ENCODE measurements at regions of chr3 and their contacts with region 1.

Region 1: GRCh38 chr3:73572368-73572767 is 52.4 kb downstream of the PDZRN3 start:
- DNase-seq: peak; percentile 75 to 89
- H3K4me3 ChIP-seq: no peak overlapping the region
- H3K4me3 Mint-ChIP-seq: peak overlapping the region; percentile 62
- H3K27ac Mint-ChIP-seq: peak overlapping the region; percentile 82
- H3K4me1 ChIP-seq: peaks cover 71% of the 10 kb centered on the region
- H3K4me1 Mint-ChIP-seq: peaks cover 59% of the 10 kb centered on the region
- H3K27me3 ChIP-seq: no peaks in the 10 kb centered on the region
- H3K27me3 Mint-ChIP-seq: no peaks in the 10 kb centered on the region
- CTCF ChIP-seq: no peak

Region 2: DNA sequence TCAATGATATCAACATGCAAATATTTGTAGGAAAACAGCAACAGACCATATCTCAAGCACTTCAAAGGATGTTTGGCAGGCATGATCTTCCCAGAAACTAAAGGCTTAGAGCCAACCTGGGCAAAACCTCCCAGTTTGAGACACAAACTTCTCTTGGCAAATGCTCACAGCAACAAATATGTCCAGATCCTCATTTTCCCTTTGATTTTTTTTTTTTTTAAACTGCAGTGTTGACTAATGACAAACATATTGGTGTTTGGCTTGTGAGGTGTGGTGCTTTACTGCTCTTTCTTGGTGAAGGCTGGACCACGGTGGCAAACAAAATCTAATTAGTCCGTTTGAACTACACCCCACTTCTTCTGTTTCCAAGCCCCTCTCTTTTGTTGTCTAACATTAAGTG is 423.7 kb before region 1 on chr3:
- CTCF ChIA-PET with region 1: no interaction called
- POLR2A ChIA-PET with region 1: no interaction called
- intact Hi-C with region 1: loop called (anchors 5 kb)
- DNase-seq: peak; percentile 58 to 67
- H3K4me3 ChIP-seq: no peak overlapping the region
- H3K4me3 Mint-ChIP-seq: peak overlapping the region; percentile 14
- H3K27ac Mint-ChIP-seq: peak overlapping the region; percentile 63
- H3K4me1 ChIP-seq: peaks cover 35% of the 10 kb centered on the region
- H3K4me1 Mint-ChIP-seq: peaks cover 23% of the 10 kb centered on the region
- H3K27me3 ChIP-seq: no peaks in the 10 kb centered on the region
- H3K27me3 Mint-ChIP-seq: no peaks in the 10 kb centered on the region
- CTCF ChIP-seq: no peak

Region 3: GRCh38 chr3:73530022-73530396 is 42.4 kb before region 1 on chr3:
- CTCF ChIA-PET with region 1: no interaction called
- POLR2A ChIA-PET with region 1: no interaction called
- intact Hi-C with region 1: loop called (anchors 2 kb)
- DNase-seq: no peak
- H3K4me3 ChIP-seq: no peak overlapping the region
- H3K4me3 Mint-ChIP-seq: no peak overlapping the region
- H3K27ac Mint-ChIP-seq: no peak overlapping the region
- H3K4me1 ChIP-seq: peaks cover 11% of the 10 kb centered on the region
- H3K4me1 Mint-ChIP-seq: peaks cover 26% of the 10 kb centered on the region
- H3K27me3 ChIP-seq: no peaks in the 10 kb centered on the region
- H3K27me3 Mint-ChIP-seq: no peaks in the 10 kb centered on the region
- CTCF ChIP-seq: no peak

Region 4: DNA sequence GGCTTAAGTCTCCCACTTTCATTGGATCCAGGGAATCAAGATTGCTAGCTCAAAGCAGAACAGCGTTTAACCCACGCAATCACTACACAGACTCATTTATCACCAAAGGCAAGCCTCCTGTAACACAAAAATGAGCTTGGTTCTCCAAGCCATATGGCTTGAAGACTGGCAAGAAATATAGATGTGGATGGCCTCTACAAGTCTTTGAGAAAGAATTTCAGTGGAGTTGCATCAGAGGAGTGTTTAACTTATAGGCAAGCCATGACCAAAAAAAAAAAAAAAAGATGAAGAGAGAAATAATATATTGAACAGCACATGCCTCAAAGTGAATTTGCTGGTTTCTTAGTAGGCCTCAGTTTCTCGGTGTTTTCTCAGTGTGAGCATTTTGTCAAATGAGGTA is 25.1 kb after region 1 on chr3:
- CTCF ChIA-PET with region 1: no interaction called
- POLR2A ChIA-PET with region 1: interaction called, 7 read pairs
- intact Hi-C with region 1: loop called (anchors 1 kb)
- DNase-seq: no peak
- H3K4me3 ChIP-seq: no peak overlapping the region
- H3K4me3 Mint-ChIP-seq: no peak overlapping the region
- H3K27ac Mint-ChIP-seq: peak overlapping the region; percentile 66
- H3K4me1 ChIP-seq: peaks cover 18% of the 10 kb centered on the region
- H3K4me1 Mint-ChIP-seq: peaks cover 25% of the 10 kb centered on the region
- H3K27me3 ChIP-seq: no peaks in the 10 kb centered on the region
- H3K27me3 Mint-ChIP-seq: no peaks in the 10 kb centered on the region
- CTCF ChIP-seq: no peak

Region 5: DNA sequence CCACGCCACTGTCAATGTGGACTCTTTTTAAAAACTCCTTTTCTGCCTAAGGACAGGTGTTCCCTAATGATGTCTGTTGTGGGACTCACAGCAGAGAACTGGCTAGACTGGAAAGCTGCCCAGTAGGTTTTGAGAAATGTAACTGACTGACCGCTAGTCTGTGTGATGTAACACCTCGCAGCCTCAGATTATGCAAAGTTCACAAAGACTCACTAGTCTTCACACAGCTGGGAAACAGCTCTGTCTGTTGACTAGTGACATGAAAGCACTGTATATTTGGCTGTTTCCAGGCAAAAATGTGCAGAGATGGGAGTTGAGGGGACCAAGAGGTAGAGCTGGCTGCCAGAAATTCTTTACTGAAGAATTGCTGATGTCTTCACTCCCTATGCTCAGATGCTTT is 42.0 kb after region 1 on chr3:
- CTCF ChIA-PET with region 1: no interaction called
- POLR2A ChIA-PET with region 1: no interaction called
- intact Hi-C with region 1: loop called (anchors 1 kb)
- DNase-seq: peak; percentile 55 to 72
- H3K4me3 ChIP-seq: no peak overlapping the region
- H3K4me3 Mint-ChIP-seq: no peak overlapping the region
- H3K27ac Mint-ChIP-seq: peak overlapping the region; percentile 25
- H3K4me1 ChIP-seq: peaks cover 48% of the 10 kb centered on the region
- H3K4me1 Mint-ChIP-seq: peaks cover 32% of the 10 kb centered on the region
- H3K27me3 ChIP-seq: no peaks in the 10 kb centered on the region
- H3K27me3 Mint-ChIP-seq: no peaks in the 10 kb centered on the region
- CTCF ChIP-seq: no peak

Region 6: DNA sequence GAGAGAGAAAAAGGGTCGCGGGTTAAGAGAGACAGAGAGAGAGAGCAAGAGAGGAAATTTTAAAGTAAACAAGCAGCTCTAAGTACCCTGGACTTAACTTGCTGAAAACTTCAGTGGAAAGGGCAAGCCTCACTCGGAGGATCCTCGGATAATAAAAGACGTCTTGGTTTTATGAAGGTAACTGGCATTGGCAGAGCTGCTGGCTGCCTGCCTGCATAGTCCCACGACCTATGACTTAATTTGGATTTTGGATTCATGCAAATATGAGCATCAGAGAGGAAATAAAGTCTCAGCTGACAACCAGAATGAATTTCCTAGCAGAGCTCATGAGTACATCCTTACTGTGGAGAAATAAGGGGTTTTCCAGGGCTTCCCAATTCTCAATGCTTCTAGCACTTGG is 147.5 kb after region 1 on chr3:
- CTCF ChIA-PET with region 1: no interaction called
- POLR2A ChIA-PET with region 1: no interaction called
- intact Hi-C with region 1: loop called (anchors 2 kb)
- DNase-seq: no peak
- H3K4me3 ChIP-seq: no peak overlapping the region
- H3K4me3 Mint-ChIP-seq: no peak overlapping the region
- H3K27ac Mint-ChIP-seq: no peak overlapping the region
- H3K4me1 ChIP-seq: peaks cover 3% of the 10 kb centered on the region; the same call in 1 of the 2 replicates
- H3K4me1 Mint-ChIP-seq: no peaks in the 10 kb centered on the region
- H3K27me3 ChIP-seq: no peaks in the 10 kb centered on the region
- H3K27me3 Mint-ChIP-seq: no peaks in the 10 kb centered on the region
- CTCF ChIP-seq: no peak

Measured in Caco-2 (cell line).